ENCODE measurements at regions of chr14 and their contacts with region 1.

Region 1: GRCh38 chr14:36398463-36399260 is 78.2 kb upstream of the MBIP start:
- DNase-seq: no peak
- H3K4me3 ChIP-seq: no peak overlapping the region
- H3K27ac ChIP-seq: no peak overlapping the region
- H3K4me1 ChIP-seq: no peaks in the 10 kb centered on the region
- H3K27me3 ChIP-seq: no peaks in the 10 kb centered on the region
- CTCF ChIP-seq: no peak
- POLR2A ChIP-seq: no peak

Region 2: GRCh38 chr14:36129181-36129580 is 269.5 kb before region 1 on chr14:
- intact Hi-C with region 1: loop called in 1 of 2 experiments (anchors 5 kb)
- DNase-seq: no peak
- H3K4me3 ChIP-seq: no peak overlapping the region
- H3K27ac ChIP-seq: no peak overlapping the region
- H3K4me1 ChIP-seq: no peaks in the 10 kb centered on the region
- H3K27me3 ChIP-seq: no peaks in the 10 kb centered on the region
- CTCF ChIP-seq: no peak
- POLR2A ChIP-seq: no peak

Region 3: GRCh38 chr14:36302823-36303222 is 95.8 kb before region 1 on chr14:
- intact Hi-C with region 1: no loop called
- DNase-seq: no peak
- H3K4me3 ChIP-seq: no peak overlapping the region
- H3K27ac ChIP-seq: no peak overlapping the region
- H3K4me1 ChIP-seq: peaks cover 0 to 15% of the 10 kb centered on the region in 2 donors
- H3K27me3 ChIP-seq: no peaks in the 10 kb centered on the region
- CTCF ChIP-seq: no peak
- POLR2A ChIP-seq: no peak